Dendritic cell treated with granulocyte-macrophage colony-stimulating factor and Interleukin-4, amounts not matched to agents 40 ng/mL and 50 ng/mL, for 4 days (primary cell): ENCODE measurements at regions of chr2 and their contacts with region 1.

Region 1: GRCh38 chr2:203751685-203752271 is 45.3 kb downstream of the CD28 start:
- H3K4me3 Mint-ChIP-seq: no peak overlapping the region
- H3K27ac Mint-ChIP-seq: peak overlapping the region; percentile 50
- H3K4me1 Mint-ChIP-seq: no peaks in the 10 kb centered on the region
- H3K27me3 Mint-ChIP-seq: no peaks in the 10 kb centered on the region

Region 2: GRCh38 chr2:203797712-203798111 is 45.9 kb after region 1 on chr2:
- intact Hi-C with region 1: loop called (anchors 1 kb)
- H3K4me3 Mint-ChIP-seq: no peak overlapping the region
- H3K27ac Mint-ChIP-seq: no peak overlapping the region
- H3K4me1 Mint-ChIP-seq: peaks cover 28% of the 10 kb centered on the region
- H3K27me3 Mint-ChIP-seq: no peaks in the 10 kb centered on the region